ENCODE measurements at regions of chr18 and their contacts with region 1.

Region 1: DNA sequence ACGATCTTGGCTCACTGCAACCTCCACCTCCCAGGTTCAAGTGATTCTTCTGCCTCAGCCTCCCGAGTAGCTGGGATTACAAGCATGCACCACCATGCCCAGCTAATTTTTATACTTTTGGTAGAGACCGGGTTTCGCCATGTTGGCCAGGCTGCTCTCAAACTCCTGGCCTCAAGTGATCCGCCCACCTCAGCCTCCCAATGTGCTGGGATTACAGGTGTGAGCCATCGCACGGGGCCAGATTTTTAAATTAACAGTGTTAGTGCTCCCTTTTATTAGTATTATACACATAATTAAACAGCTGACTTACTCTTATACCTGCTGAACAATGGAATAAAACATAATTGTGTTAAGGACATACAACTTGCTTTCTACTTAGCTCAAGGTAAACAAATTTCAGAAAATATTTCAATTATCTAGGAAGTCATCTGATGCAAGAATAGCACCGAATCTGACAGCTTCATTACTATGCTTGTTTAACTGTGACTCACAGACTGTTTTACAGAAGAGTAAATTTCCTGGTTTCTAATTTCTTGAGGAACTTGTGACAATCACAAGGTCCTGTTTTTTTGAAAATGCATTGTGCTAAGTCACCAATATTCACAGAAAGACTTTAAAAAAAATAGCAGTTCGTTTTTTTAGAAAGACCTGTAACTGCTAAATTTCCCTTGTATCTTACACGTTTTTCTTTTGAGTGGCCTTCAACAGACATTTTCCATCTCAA is 51.2 kb downstream of the SPIRE1 start:
- DNase-seq: peak; percentile 90
- H3K4me3 ChIP-seq: peak overlapping the region; percentile 36
- H3K27ac ChIP-seq: peak overlapping the region; percentile 97
- H3K4me1 ChIP-seq: peaks cover 33% of the 10 kb centered on the region
- H3K27me3 ChIP-seq: no peaks in the 10 kb centered on the region

Region 2: GRCh38 chr18:12659904-12660605 is 53.3 kb after region 1 on chr18:
- in situ Hi-C with region 1: loop called (anchors 10 kb)
- DNase-seq: peak; percentile 75
- H3K4me3 ChIP-seq: no peak overlapping the region
- H3K27ac ChIP-seq: no peak overlapping the region
- H3K4me1 ChIP-seq: peaks cover 14% of the 10 kb centered on the region; the same call in 1 of the 2 replicates
- H3K27me3 ChIP-seq: no peaks in the 10 kb centered on the region